ENCODE measurements at regions of chr19 and their contacts with region 1.

Region 1: GRCh38 chr19:19145684-19146608 is 7.7 kb upstream of the TMEM161A start:
- DNase-seq: peak; percentile 79
- H3K4me3 Mint-ChIP-seq: no peak overlapping the region
- H3K27ac Mint-ChIP-seq: no peak overlapping the region
- H3K4me1 Mint-ChIP-seq: no peaks in the 10 kb centered on the region
- H3K27me3 Mint-ChIP-seq: no peaks in the 10 kb centered on the region

Region 2: GRCh38 chr19:19192078-19192882 is 46.3 kb after region 1 on chr19 and contains the starts of genes BORCS8 and RFXANK:
- intact Hi-C with region 1: no loop called
- DNase-seq: peak; percentile 99
- H3K4me3 Mint-ChIP-seq: peak within 1 kb of the TSS; percentile 94
- H3K27ac Mint-ChIP-seq: peak within 1 kb of the TSS; percentile 99
- H3K4me1 Mint-ChIP-seq: peaks cover 18% of the 10 kb centered on the region
- H3K27me3 Mint-ChIP-seq: no peaks in the 10 kb centered on the region
- total RNA-seq, gene BORCS8: 28.8 and 33.2 TPM in 2 replicates
- total RNA-seq, gene RFXANK: 105 and 112 TPM in 2 replicates

Region 3: GRCh38 chr19:19224852-19225494 is 79.0 kb after region 1 on chr19:
- intact Hi-C with region 1: loop called (anchors 5 kb)
- DNase-seq: peak; percentile 76
- H3K4me3 Mint-ChIP-seq: peak overlapping the region; percentile 73
- H3K27ac Mint-ChIP-seq: peak overlapping the region; percentile 60
- H3K4me1 Mint-ChIP-seq: no peaks in the 10 kb centered on the region
- H3K27me3 Mint-ChIP-seq: peaks cover 11% of the 10 kb centered on the region